PC-3 (cell line): ENCODE measurements at regions of chr1 and their contacts with region 1.

Region 1: DNA sequence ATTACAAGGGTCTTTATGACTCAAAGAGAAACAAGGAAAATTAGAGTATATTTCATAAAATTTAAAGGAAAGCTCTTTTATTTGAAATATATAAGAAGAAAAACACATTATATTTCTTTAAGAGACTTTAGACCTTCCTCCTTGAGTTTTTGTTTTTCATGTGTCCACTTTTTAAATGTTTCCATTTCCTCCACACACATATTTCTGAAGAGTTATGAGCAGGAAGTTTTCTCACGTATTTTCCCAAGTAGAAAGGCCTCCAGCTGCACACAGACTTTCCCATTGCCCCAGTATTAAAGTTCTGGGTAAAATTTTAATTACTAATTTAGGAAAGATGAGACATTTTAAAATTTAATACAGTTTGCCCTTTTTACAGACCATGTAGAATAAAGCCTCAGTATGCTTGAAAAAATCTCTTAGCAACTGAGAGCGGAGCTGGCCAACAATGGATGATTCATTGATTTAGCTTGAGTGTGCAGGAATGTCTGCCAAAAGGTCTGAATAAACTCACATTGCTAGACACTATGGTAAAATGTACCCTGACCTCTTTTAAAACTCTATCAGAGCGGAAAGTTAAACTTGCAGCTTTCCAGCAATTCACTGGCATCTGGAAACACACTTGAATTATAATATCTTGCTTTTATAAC is 57.9 kb downstream of the DDAH1 start:
- DNase-seq: peak; percentile 91
- ATAC-seq: peak; percentile 99
- H3K4me3 ChIP-seq: peak overlapping the region; percentile 54
- H3K27ac ChIP-seq: peak overlapping the region; percentile 70
- H3K4me1 ChIP-seq: peaks cover 18% of the 10 kb centered on the region
- H3K27me3 ChIP-seq: no peaks in the 10 kb centered on the region
- CTCF ChIP-seq: no peak

Region 2: GRCh38 chr1:85464497-85465098 is 57.6 kb after region 1 on chr1:
- CTCF ChIA-PET with region 1: no interaction called
- POLR2A ChIA-PET with region 1: no interaction called
- intact Hi-C with region 1: loop called (anchors 5 kb)
- DNase-seq: peak; percentile 73
- ATAC-seq: peak; percentile 69
- H3K4me3 ChIP-seq: peak overlapping the region; percentile 94
- H3K27ac ChIP-seq: no peak overlapping the region
- H3K4me1 ChIP-seq: peaks cover 48% of the 10 kb centered on the region
- H3K27me3 ChIP-seq: no peaks in the 10 kb centered on the region
- CTCF ChIP-seq: no peak

Region 3: DNA sequence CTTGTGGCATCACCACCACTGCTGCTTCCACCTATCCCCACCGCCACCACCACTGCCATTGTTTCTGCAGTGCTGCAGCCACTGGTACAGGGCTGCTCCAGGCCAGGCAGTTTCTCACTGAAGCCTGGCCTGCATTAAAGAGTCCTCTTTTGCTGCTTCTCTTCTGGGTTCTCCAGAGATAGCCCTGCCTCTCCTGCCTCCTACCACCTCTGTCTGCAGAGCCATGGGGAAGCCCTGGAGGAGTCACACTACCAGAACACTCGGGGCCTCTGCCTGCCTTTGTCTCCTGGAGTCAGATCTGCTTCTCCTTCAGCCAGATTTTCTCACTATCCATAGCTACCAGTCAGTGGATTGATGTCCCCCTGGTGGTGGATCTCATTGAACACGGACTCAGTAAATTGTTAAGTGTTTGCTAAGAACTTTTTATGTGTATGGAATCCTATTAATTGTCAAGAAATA is 95.6 kb after region 1 on chr1:
- CTCF ChIA-PET with region 1: no interaction called
- POLR2A ChIA-PET with region 1: no interaction called
- intact Hi-C with region 1: loop called (anchors 5 kb)
- DNase-seq: peak; percentile 79
- ATAC-seq: peak; percentile 87
- H3K4me3 ChIP-seq: no peak overlapping the region
- H3K27ac ChIP-seq: no peak overlapping the region
- H3K4me1 ChIP-seq: peaks cover 11% of the 10 kb centered on the region
- H3K27me3 ChIP-seq: no peaks in the 10 kb centered on the region
- CTCF ChIP-seq: peak; percentile 75

Region 4: DNA sequence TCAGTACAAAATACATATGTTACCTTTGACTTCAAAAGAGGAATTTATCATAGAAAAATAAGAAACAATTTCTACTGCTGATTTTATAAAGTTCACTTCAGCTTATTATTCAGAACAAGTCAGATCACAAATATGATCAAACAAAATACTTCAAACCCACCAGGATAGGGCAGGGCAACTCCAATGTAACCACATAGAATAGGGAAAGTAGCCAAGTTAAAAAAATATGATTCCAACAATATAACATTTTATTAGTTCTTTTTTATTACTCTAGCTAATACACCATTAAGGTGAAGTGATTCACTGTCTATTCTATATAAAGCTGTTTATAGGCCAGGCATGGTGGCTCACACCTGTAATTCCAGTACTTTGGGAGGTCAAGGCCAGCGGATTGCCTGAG is 355.8 kb after region 1 on chr1:
- CTCF ChIA-PET with region 1: no interaction called
- POLR2A ChIA-PET with region 1: no interaction called
- intact Hi-C with region 1: no loop called
- DNase-seq: peak; percentile 88
- ATAC-seq: peak; percentile 89
- H3K4me3 ChIP-seq: no peak overlapping the region
- H3K27ac ChIP-seq: peak overlapping the region; percentile 68
- H3K4me1 ChIP-seq: peaks cover 16% of the 10 kb centered on the region
- H3K27me3 ChIP-seq: no peaks in the 10 kb centered on the region
- CTCF ChIP-seq: no peak